ENCODE measurements at regions of chr11 and their contacts with region 1.

Region 1: DNA sequence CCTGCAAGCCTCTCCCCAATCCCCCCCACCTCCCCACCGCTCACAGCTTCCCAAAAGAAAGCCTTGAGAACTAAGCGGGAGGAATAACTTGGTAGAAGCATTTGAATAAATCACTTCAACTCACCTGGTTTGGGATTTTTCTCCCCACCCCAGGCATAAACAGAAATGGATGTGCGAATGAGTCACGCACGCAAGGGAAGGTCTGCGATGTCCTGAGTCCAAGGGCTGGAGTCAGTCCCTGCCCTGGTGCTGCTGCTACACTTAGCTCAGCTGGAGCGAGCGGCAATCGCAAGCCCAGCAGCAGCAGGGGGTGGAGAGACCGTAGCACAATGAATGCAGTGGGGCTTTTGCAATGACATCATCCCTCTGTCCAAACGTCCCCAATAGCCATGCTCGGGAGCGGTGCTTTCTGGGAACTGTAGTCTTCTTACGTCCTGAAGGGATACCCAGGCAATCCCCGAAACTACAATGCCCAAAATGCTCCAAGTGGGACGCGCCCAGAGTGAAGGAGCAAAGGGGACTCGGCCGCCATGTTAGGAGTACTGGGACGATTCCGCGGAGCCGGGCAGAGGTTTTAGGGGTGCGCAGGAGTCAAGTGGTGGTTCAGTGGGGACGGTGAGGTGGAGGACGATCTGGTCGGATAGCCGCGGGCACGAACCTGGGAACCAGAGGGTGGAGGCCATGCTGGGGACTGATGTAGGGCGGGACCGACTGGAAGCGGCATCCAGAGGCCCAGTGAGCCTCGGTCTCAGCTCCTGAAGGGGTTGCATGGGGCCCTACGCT is at the start of gene RAB30:
- DNase-seq: peak; percentile 92 to 98 (median 95)
- H3K4me3 ChIP-seq: peak within 1 kb of the TSS; percentile 57
- H3K27ac ChIP-seq: peak within 1 kb of the TSS; percentile 80 to 90
- H3K4me1 ChIP-seq: peaks cover 10% of the 10 kb centered on the region
- H3K27me3 ChIP-seq: no peaks in the 10 kb centered on the region
- CTCF ChIP-seq: peak in 1 of 3 donors; percentile 17
- EP300 ChIP-seq: peak; percentile 30
- POLR2A ChIP-seq: peak; percentile 98
- total RNA-seq, gene RAB30: 9.0 to 30.4 (median 22.7) TPM

Region 2: DNA sequence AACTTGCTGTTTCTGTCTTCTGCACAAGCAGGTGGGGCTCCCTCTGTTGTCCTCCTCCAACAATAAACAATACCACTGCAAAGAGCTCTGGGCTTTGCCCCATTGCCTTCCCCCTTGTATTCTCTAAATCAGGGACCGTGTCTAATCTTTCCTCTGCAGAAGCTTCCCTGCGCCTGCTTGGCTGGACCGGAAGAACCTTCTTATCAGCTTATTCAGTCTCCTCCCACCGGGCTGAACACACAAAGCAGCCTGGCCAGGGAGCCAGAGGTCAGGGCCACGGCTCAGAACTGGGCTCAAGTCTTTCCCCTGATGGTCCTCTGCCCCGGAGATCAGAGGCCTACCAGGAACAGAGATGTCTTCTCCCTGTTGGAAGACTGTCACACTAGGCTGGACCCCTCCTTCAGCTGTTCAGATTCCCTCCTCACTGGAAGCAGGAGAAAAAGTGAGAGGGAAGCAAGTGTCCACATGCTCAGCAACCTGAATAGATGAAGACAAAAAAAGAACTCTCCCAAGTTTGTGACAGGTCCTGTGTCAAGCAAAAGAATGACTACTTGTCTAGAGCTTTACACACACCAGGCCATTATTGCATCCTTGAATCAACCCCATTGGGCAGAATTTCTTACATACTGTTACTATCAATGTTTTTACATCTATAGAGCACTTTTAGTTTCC is 63.7 kb before region 1 on chr11:
- intact Hi-C with region 1: loop called in 1 of 4 experiments (anchors 10 kb)
- DNase-seq: peak; percentile 81 to 89 (median 85)
- H3K4me3 ChIP-seq: no peak overlapping the region
- H3K27ac ChIP-seq: peak overlapping the region; percentile 24 to 46
- H3K4me1 ChIP-seq: peaks cover 28% of the 10 kb centered on the region
- H3K27me3 ChIP-seq: no peaks in the 10 kb centered on the region
- CTCF ChIP-seq: no peak
- EP300 ChIP-seq: no peak
- POLR2A ChIP-seq: no peak

Region 3: GRCh38 chr11:83033972-83034672 is 37.6 kb before region 1 on chr11:
- intact Hi-C with region 1: loop called in 2 of 4 experiments (anchors 5 kb)
- DNase-seq: peak; percentile 52 to 68 (median 56)
- H3K4me3 ChIP-seq: peak overlapping the region; percentile 18
- H3K27ac ChIP-seq: peak overlapping the region in 1 of 2 donors; percentile 60
- H3K4me1 ChIP-seq: peaks cover 12% of the 10 kb centered on the region
- H3K27me3 ChIP-seq: no peaks in the 10 kb centered on the region
- CTCF ChIP-seq: no peak
- EP300 ChIP-seq: no peak
- POLR2A ChIP-seq: no peak

Region 4: GRCh38 chr11:83156150-83156995 is 84.6 kb after region 1 on chr11:
- intact Hi-C with region 1: loop called in 2 of 4 experiments (anchors 2 to 5 kb)
- DNase-seq: peak; percentile 99
- H3K4me3 ChIP-seq: peak overlapping the region; percentile 77
- H3K27ac ChIP-seq: peak overlapping the region; percentile 73 to 90
- H3K4me1 ChIP-seq: peaks cover 3% of the 10 kb centered on the region
- H3K27me3 ChIP-seq: no peaks in the 10 kb centered on the region
- CTCF ChIP-seq: no peak
- EP300 ChIP-seq: no peak
- POLR2A ChIP-seq: peak; percentile 97

Region 5: GRCh38 chr11:83235825-83236224 is 164.1 kb after region 1 on chr11:
- intact Hi-C with region 1: no loop called
- DNase-seq: no peak
- H3K4me3 ChIP-seq: no peak overlapping the region
- H3K27ac ChIP-seq: no peak overlapping the region
- H3K4me1 ChIP-seq: no peaks in the 10 kb centered on the region
- H3K27me3 ChIP-seq: no peaks in the 10 kb centered on the region
- CTCF ChIP-seq: no peak
- EP300 ChIP-seq: no peak
- POLR2A ChIP-seq: no peak